ENCODE measurements at regions of chr17 and their contacts with region 1.

Region 1: DNA sequence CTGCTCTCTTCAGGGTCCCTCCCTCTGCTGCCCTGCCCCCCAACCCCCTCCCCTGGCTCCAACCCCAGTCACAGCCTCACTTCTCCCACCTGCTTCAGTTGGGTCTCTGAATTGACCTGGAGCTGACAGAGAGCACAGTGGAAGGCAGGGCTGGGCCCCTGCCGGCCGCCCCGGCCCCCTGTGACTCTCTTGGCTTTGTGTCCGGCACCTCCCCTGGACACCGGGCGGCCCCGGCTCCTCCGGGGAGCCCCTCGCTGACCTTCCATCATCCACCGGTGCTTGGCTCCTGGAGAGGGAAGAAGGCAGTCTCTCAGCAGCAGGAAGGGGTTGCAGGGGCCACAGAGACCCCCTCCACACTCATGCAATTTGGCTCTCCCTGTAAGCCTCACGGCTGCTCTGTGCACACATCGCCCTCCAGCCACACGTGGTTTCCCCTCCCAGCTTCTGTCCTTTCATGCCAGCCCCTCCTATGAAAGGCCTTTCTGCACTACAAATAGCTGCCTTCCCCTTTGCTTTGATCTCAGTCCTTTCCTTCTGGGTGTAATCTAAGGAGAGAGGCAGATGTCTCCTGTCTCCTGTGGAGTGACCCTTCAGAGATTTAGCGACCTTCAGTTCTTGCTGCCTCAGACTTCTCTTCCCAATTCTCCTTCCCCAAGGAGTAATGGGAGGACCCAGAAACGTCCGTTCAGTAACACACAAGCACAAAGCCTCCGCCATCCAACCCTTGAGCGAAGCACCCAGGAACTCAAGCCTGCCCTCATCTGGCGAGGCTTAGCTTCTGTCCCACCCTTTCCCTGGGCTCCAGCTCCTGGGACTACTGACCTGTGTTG is 8.3 kb downstream of the NKIRAS2 start:
- DNase-seq: no peak
- ATAC-seq: no peak
- H3K4me3 ChIP-seq: no peak overlapping the region
- H3K4me3 Mint-ChIP-seq: no peak overlapping the region
- H3K27ac ChIP-seq: no peak overlapping the region
- H3K27ac Mint-ChIP-seq: no peak overlapping the region
- H3K4me1 ChIP-seq: peaks cover 11% of the 10 kb centered on the region
- H3K4me1 Mint-ChIP-seq: peaks cover 6% of the 10 kb centered on the region
- H3K27me3 ChIP-seq: no peaks in the 10 kb centered on the region
- H3K27me3 Mint-ChIP-seq: peaks cover 5% of the 10 kb centered on the region
- CTCF ChIP-seq: no peak

Region 2: DNA sequence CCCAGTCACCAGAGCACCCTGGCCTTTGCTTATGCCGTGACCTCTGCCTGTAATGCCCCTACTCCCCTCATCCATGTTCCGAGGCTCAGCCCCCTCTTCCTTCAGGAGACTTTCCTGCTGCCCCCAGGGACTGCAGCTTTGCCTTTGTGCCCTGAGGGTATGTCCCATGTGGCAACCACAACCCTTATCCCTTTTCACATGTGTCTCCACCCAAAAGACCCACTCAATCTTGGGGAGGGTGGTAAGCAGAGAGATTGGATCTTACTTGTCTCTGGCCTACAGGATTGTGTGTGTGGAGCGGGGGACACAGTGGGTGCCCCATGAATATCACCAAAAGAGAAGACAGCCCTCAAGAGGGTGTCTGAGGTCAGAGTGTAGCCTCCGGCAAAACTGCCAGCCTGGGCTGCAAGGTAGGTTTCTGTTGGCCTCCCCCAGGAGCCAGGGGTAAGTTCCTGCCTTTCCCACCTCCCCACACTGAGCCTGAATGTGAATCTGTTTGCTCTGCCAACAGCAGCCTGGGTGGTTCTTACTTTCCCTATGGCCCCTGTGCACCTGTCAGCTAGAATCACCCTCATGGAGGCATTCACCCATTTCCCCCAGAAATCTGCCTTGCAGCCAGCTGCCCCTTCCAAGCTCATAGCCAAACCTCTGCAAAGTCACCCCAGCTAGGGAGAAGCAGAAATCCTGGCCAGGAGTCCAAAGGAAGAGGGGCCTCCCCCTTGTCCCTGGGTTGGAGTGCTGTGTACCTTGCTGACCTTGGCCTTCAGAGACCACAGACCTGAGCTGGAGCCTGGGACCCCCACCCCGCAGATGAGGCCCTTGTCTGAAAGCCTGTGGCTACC is 33.7 kb after region 1 on chr17:
- CTCF ChIA-PET with region 1: no interaction called
- POLR2A ChIA-PET with region 1: no interaction called
- intact Hi-C with region 1: loop called (anchors 1 to 5 kb)
- DNase-seq: no peak
- ATAC-seq: no peak
- H3K4me3 ChIP-seq: no peak overlapping the region
- H3K4me3 Mint-ChIP-seq: no peak overlapping the region
- H3K27ac ChIP-seq: no peak overlapping the region
- H3K27ac Mint-ChIP-seq: no peak overlapping the region
- H3K4me1 ChIP-seq: peaks cover 10% of the 10 kb centered on the region
- H3K4me1 Mint-ChIP-seq: peaks cover 26% of the 10 kb centered on the region
- H3K27me3 ChIP-seq: peaks cover 0 to 4% of the 10 kb centered on the region in 2 experiments
- H3K27me3 Mint-ChIP-seq: peaks cover 15% of the 10 kb centered on the region
- CTCF ChIP-seq: no peak

Region 3: DNA sequence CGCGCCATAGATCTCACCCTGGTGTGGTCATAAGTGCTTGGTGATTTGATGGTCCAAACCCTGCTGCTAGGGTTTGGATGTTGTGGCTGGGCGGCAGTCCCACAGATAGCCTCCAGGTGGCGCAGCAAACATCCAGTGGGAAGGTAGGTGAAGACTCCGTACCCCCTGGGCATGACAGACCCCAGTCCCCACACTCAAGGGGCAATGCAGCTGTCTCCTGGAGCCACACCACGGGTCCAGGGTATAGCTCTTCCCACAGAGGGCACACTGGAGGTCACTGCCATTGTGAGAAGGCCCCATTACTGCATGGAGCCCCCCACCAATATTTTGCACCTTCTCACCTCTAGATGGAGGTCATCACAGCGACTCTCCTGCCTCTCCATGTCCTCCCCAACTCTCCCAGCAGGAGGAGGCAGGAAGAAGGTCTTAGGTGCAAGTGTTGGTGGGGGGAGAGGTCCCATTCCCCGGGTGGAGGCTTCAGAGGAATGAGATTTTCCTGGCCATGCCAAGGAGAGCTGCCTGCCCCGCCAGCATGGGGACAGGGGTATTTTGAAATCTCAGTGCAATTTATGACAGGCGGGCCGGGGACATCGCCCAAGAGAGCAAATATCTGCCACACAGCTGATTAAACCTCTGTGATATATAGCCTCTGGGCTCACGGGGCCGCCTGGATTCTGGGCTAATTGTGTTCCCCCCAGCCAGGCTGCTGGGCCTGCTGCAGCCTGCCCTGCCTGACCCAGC is 39.3 kb after region 1 on chr17:
- CTCF ChIA-PET with region 1: no interaction called
- POLR2A ChIA-PET with region 1: no interaction called
- intact Hi-C with region 1: loop called (anchors 1 to 5 kb)
- DNase-seq: peak; percentile 56 to 83 (median 66)
- ATAC-seq: peak; percentile 53
- H3K4me3 ChIP-seq: no peak overlapping the region
- H3K4me3 Mint-ChIP-seq: no peak overlapping the region
- H3K27ac ChIP-seq: no peak overlapping the region
- H3K27ac Mint-ChIP-seq: no peak overlapping the region
- H3K4me1 ChIP-seq: peaks cover 24% of the 10 kb centered on the region
- H3K4me1 Mint-ChIP-seq: peaks cover 31% of the 10 kb centered on the region
- H3K27me3 ChIP-seq: peaks cover 8 to 11% of the 10 kb centered on the region in 2 experiments
- H3K27me3 Mint-ChIP-seq: peaks cover 24% of the 10 kb centered on the region
- CTCF ChIP-seq: peak; percentile 96

Region 4: DNA sequence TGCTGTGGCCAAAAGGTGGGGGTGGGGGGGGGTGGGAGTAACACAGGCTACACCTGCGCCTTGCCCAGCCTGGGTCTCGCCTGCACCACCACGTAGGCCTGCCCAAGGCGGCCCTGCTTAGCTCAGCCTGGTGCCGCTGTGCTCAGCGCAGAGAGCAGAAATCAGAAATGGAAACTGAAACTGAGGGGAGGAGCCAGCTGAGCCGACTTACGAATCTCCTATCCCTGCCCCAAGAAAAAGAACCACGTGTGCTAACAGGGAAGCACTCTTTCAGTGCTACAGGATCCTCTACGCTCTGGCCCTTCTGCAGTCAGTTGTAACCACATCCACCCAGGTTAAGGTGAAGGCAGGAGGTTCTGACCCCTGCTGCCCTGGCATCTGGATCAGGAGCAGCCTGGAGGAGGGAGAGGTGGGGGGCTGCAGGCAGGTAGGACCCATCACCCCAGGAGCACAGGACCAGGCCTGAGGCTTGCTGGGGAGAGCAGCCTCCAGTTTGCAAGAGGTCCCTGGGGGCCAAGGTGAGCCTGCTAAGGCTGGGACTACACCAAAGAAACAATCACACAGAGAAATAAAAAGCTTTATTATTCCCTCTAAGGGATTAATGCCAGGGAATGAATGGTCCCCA is 84.5 kb after region 1 on chr17 and contains the start of gene DHX58:
- CTCF ChIA-PET with region 1: interaction called, 9 read pairs
- POLR2A ChIA-PET with region 1: interaction called, 6 read pairs
- intact Hi-C with region 1: loop called (anchors 1 kb)
- DNase-seq: peak; percentile 65 to 93 (median 73)
- ATAC-seq: peak; percentile 79
- H3K4me3 ChIP-seq: peak within 1 kb of the TSS; percentile 58
- H3K4me3 Mint-ChIP-seq: peak within 1 kb of the TSS; percentile 92
- H3K27ac ChIP-seq: peak within 1 kb of the TSS; percentile 66 to 79
- H3K27ac Mint-ChIP-seq: peak within 1 kb of the TSS; percentile 87
- H3K4me1 ChIP-seq: peaks cover 48% of the 10 kb centered on the region
- H3K4me1 Mint-ChIP-seq: peaks cover 50% of the 10 kb centered on the region
- H3K27me3 ChIP-seq: no peaks in the 10 kb centered on the region
- H3K27me3 Mint-ChIP-seq: no peaks in the 10 kb centered on the region
- CTCF ChIP-seq: no peak
- total RNA-seq, gene DHX58: 33.5 to 35.6 TPM

Region 5: DNA sequence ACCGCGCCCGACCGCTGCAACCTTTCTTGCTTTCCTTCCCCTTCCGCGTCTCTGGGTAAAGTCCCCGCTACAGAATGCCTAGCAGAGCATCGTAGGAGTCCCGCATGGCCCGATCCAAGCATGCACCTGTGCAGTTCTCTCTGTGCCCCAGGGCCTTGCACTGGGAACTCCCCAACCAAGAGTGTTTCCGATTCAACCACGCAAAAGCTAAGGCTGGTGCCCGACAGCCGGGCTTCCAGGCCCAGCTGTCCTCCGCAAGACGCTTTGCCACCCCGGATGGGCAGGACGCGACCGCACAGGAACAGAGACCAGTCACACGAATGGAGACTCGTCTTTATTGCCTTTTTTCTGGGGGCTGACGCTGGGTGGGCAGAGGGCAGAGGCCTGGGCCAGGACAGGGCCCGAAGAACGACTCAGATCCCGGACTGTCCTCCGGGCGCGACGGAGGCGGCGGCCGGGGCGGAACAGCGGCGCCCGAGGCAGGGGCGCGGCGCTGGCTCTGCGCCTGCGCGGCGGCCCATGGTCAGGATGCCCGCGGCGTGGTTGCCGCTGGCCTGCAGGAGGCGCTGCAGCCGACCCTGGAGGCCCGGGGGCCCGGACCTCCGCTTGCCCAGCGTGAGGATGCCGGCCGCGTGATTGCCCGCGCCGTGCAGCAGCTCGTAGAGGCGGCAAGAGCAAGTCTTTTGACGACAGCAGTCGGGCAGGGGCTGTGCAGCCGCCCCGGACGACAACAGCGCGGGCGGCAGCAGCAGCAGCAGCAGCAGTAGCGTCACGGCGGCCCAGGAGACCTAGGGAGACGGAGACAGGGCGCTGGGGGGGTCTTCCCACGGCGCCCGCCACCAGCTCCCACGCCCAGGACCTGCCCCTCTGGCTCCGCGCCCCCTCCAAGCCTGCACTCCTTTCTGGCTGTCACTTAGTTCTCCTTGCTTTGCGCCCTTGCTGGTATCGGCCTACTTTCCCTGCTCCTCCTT is 155.8 kb after region 1 on chr17:
- CTCF ChIA-PET with region 1: no interaction called
- POLR2A ChIA-PET with region 1: no interaction called
- intact Hi-C with region 1: no loop called
- DNase-seq: peak; percentile 39 to 90 (median 68)
- ATAC-seq: peak; percentile 63
- H3K4me3 ChIP-seq: peak overlapping the region; percentile 87
- H3K4me3 Mint-ChIP-seq: peak overlapping the region; percentile 86
- H3K27ac ChIP-seq: peak overlapping the region; percentile 73 to 75
- H3K27ac Mint-ChIP-seq: peak overlapping the region; percentile 79
- H3K4me1 ChIP-seq: peaks cover 53% of the 10 kb centered on the region
- H3K4me1 Mint-ChIP-seq: peaks cover 39% of the 10 kb centered on the region
- H3K27me3 ChIP-seq: peaks cover 0 to 14% of the 10 kb centered on the region in 2 experiments
- H3K27me3 Mint-ChIP-seq: peaks cover 30% of the 10 kb centered on the region
- CTCF ChIP-seq: peak; percentile 68

Region 6: DNA sequence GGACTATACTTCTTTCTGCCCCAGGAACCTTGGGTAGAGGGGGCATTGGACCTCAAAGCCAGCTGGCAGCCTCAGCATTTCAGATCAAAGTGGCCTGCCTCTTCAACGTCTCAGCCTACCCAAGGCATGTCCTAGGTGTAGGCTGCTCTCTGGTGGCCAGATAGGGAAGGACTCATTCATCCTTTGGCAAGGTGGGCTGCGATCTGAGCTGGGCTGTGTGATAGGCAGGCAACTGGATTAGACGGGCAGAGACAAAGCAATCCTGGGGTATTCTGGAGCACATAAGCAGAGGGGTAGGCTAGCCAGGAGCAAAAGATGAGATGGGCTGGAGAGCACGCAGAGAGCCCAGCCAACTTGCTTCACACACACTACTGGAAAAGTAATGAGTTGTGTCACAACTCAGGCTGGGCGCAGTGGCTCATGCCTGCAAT is 499.1 kb after region 1 on chr17:
- CTCF ChIA-PET with region 1: no interaction called
- POLR2A ChIA-PET with region 1: no interaction called
- intact Hi-C with region 1: loop called in 1 of 2 experiments (anchors 5 kb)
- DNase-seq: peak; percentile 45 to 84 (median 63)
- ATAC-seq: peak; percentile 75
- H3K4me3 ChIP-seq: no peak overlapping the region
- H3K4me3 Mint-ChIP-seq: peak overlapping the region; percentile 13
- H3K27ac ChIP-seq: no peak overlapping the region
- H3K27ac Mint-ChIP-seq: peak overlapping the region; percentile 4
- H3K4me1 ChIP-seq: peaks cover 40% of the 10 kb centered on the region
- H3K4me1 Mint-ChIP-seq: peaks cover 33% of the 10 kb centered on the region
- H3K27me3 ChIP-seq: no peaks in the 10 kb centered on the region
- H3K27me3 Mint-ChIP-seq: peaks cover 3% of the 10 kb centered on the region
- CTCF ChIP-seq: peak; percentile 51